Left ventricle myocardium superior (tissue), 1 donor: ENCODE measurements at regions of chr6 and their contacts with region 1.

Region 1: DNA sequence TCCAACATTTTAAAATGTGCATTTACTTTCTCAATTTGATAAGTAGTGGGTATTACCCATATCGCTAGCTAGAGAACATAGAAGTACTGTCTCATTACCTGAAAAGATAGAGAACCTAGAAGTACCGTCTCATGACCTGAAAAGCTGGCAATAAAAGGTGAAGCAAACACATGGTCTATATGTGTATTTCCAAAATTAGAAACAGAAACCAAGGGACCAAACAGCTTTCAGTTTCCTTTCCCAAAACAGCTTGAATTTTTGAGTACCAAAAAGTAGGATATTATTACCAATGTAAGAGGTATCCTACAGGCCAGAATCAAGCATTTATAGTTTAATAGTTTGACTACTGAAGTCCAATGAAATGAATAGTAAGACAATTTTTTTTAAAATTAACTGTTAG is 77.2 kb downstream of the KIF13A start:
- DNase-seq: no peak
- ATAC-seq: peak; percentile 34

Region 2: GRCh38 chr6:17865798-17866725 is 44.1 kb before region 1 on chr6:
- intact Hi-C with region 1: loop called (anchors 10 kb)
- DNase-seq: peak; percentile 67
- ATAC-seq: peak; percentile 89